ENCODE measurements at regions of chr13 and their contacts with region 1.

Region 1: DNA sequence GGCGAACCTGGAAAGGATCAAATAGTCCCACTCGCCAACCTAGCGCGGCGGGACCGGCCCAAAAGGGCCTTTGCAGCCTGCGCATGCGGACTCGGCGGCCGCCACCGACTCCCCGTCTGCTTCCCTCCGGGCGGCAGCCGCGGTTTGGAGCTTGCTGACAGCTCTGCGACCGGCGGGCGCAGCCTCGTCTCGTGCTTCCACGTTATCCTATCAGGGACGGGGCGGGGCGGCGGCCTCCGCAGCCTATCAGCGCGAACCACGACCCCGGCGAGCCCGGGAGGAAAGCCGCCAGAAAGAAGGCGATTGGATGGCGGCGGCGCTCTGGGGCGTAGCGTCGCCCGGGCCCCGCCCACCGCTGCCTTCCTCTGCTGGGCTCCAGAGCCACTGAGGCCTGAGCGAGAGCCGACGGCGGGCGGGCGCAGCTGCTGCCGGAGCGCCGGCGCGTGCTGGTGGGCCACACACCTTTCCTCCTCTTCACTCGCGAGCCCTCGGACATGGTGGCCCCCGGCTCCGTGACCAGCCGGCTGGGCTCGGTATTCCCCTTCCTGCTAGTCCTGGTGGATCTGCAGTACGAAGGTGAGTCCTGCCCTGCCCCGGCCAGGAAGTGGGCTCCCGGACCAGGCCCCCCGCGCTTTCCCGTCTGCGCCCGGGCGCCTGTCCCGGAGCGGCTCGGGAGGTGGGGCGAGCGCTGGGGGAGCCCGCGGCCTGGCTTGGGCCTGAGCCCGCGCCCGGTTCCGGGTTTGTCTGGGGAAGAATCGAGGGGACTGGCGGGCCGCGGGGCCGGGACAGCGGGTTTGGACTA is at the start of gene DNAJC3:
- DNase-seq: peak; percentile 98 to 99 (median 98)
- H3K4me3 ChIP-seq: peak within 1 kb of the TSS; percentile 92 to 97
- H3K4me3 Mint-ChIP-seq: peak within 1 kb of the TSS; percentile 89 to 98 (median 96)
- H3K27ac ChIP-seq: peak within 1 kb of the TSS; percentile 87
- H3K27ac Mint-ChIP-seq: peak within 1 kb of the TSS; percentile 90 to 97 (median 96)
- H3K4me1 ChIP-seq: peaks cover 50% of the 10 kb centered on the region
- H3K4me1 Mint-ChIP-seq: peaks cover 48 to 80% (median 63%) of the 10 kb centered on the region in 4 donors
- H3K27me3 ChIP-seq: no peaks in the 10 kb centered on the region
- H3K27me3 Mint-ChIP-seq: no peaks in the 10 kb centered on the region
- total RNA-seq, gene DNAJC3: 28.9 to 31.1 TPM

Region 2: DNA sequence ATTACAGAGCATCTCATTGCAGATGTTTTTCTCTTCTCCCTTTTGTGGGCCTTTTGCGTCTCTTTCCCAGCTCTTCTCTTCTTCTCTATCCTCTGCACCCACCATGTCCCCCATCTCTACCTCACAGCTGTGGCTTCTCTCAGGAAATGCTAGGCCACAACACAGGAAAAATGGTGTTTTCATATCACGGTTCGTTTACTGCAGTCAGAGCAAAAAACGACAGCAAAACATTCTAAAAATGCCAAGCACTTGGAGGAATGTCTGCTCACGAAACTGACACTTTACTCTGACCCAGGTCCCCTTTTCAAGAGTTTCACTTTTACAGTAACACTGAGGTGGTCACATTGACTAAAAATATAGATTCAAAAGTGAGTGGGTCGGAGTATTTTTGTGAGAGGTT is 1349.6 kb before region 1 on chr13:
- CTCF ChIA-PET with region 1: no interaction called
- POLR2A ChIA-PET with region 1: no interaction called
- intact Hi-C with region 1: loop called (anchors 5 kb)
- DNase-seq: peak in 3 of 5 donors; percentile 36 to 43 (median 38)
- H3K4me3 ChIP-seq: peak overlapping the region in 1 of 2 donors; percentile 7
- H3K4me3 Mint-ChIP-seq: peak overlapping the region; percentile 34 to 85 (median 78)
- H3K27ac ChIP-seq: no peak overlapping the region
- H3K27ac Mint-ChIP-seq: peak overlapping the region in 6 of 7 donors; percentile 3 to 77 (median 50)
- H3K4me1 ChIP-seq: peaks cover 86% of the 10 kb centered on the region
- H3K4me1 Mint-ChIP-seq: peaks cover 55 to 92% (median 78%) of the 10 kb centered on the region in 4 donors
- H3K27me3 ChIP-seq: no peaks in the 10 kb centered on the region
- H3K27me3 Mint-ChIP-seq: peaks cover 9 to 13% of the 10 kb centered on the region in 2 donors

Region 3: GRCh38 chr13:94601446-94602431 is 1075.2 kb before region 1 on chr13 and contains the start of gene GPR180:
- CTCF ChIA-PET with region 1: no interaction called
- POLR2A ChIA-PET with region 1: no interaction called
- intact Hi-C with region 1: loop called (anchors 5 kb)
- DNase-seq: peak; percentile 86 to 93 (median 89)
- H3K4me3 ChIP-seq: peak within 1 kb of the TSS; percentile 36 to 85
- H3K4me3 Mint-ChIP-seq: peak within 1 kb of the TSS; percentile 83 to 92 (median 86)
- H3K27ac ChIP-seq: peak within 1 kb of the TSS; percentile 57
- H3K27ac Mint-ChIP-seq: peak within 1 kb of the TSS; percentile 86 to 95 (median 92)
- H3K4me1 ChIP-seq: peaks cover 18% of the 10 kb centered on the region
- H3K4me1 Mint-ChIP-seq: peaks cover 22 to 36% (median 29%) of the 10 kb centered on the region in 4 donors
- H3K27me3 ChIP-seq: no peaks in the 10 kb centered on the region
- H3K27me3 Mint-ChIP-seq: no peaks in the 10 kb centered on the region
- total RNA-seq, gene GPR180: 4.8 to 5.3 TPM

Region 4: GRCh38 chr13:95301183-95301967 is 375.6 kb before region 1 on chr13 and contains the start of gene ABCC4:
- CTCF ChIA-PET with region 1: no interaction called
- POLR2A ChIA-PET with region 1: interaction called, 3 read pairs
- intact Hi-C with region 1: loop called (anchors 5 kb)
- DNase-seq: peak; percentile 37 to 58 (median 50)
- H3K4me3 ChIP-seq: peak within 1 kb of the TSS; percentile 65 to 70
- H3K4me3 Mint-ChIP-seq: peak within 1 kb of the TSS; percentile 82 to 93 (median 88)
- H3K27ac ChIP-seq: peak within 1 kb of the TSS; percentile 43
- H3K27ac Mint-ChIP-seq: peak within 1 kb of the TSS; percentile 36 to 95 (median 54)
- H3K4me1 ChIP-seq: peaks cover 14% of the 10 kb centered on the region
- H3K4me1 Mint-ChIP-seq: peaks cover 22 to 40% (median 30%) of the 10 kb centered on the region in 4 donors
- H3K27me3 ChIP-seq: no peaks in the 10 kb centered on the region
- H3K27me3 Mint-ChIP-seq: peaks cover 0 to 2% of the 10 kb centered on the region in 2 donors
- total RNA-seq, gene ABCC4: 7.9 to 10.0 TPM

Region 5: GRCh38 chr13:95754069-95754468 is 77.1 kb after region 1 on chr13:
- CTCF ChIA-PET with region 1: no interaction called
- POLR2A ChIA-PET with region 1: no interaction called
- intact Hi-C with region 1: loop called (anchors 5 kb)
- DNase-seq: no peak
- H3K4me3 ChIP-seq: no peak overlapping the region
- H3K4me3 Mint-ChIP-seq: no peak overlapping the region
- H3K27ac ChIP-seq: no peak overlapping the region
- H3K27ac Mint-ChIP-seq: no peak overlapping the region
- H3K4me1 ChIP-seq: no peaks in the 10 kb centered on the region
- H3K4me1 Mint-ChIP-seq: peaks cover 4 to 18% (median 8%) of the 10 kb centered on the region in 4 donors
- H3K27me3 ChIP-seq: no peaks in the 10 kb centered on the region
- H3K27me3 Mint-ChIP-seq: no peaks in the 10 kb centered on the region

Measured in CD4-positive, alpha-beta memory T cell (primary cell).